K562 (cell line): ENCODE measurements at regions of chr1 and their contacts with region 1.

Region 1: DNA sequence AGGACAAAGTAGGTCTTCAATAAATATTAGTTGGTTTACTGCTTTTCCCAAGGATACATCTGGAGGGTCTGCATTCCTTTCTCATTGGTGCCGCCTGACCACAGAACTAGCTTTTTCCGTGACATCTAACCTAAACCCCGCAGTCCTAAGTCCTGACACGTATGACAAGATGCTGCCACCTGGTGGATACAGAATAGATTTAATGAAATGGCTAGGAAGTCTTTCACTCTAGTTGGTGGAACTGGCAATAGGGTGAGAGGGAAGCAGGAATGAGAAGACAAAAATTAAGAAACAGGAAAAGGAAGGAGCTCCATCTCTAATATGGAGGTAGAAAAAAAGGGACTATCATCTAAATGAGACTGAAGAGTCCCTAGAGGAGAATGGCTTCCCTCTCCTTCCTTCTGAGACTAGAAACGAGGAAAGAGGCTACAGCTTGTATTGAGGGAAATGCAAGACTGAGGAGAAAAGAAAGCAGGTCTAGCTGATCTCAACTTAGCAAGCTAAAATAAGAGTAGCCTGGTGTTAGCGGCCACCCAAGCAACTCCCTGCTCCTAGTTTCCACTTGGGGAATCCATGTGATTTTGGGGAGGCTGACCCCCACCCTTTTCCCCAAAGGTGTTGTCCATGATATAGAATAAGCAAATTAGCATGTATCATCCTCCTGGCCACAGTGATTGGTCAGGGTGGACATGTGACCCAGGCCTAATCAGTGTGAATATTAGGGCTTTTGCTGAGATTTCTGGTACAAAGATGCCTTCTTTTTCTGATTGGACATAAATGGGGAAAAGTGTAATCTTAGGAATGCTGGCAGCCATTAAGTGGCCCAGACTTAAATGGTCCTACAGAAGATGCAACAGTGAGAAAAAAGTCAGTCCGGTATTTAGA is 5.9 kb downstream of the RFX5 start:
- DNase-seq: peak; percentile 52 to 89 (median 62)
- ATAC-seq: peak; percentile 94
- H3K4me3 ChIP-seq: no peak overlapping the region
- H3K27ac ChIP-seq: peak overlapping the region; percentile 20; the same call in 1 of the 3 replicates
- H3K4me1 ChIP-seq: peaks cover 0 to 3% of the 10 kb centered on the region in 2 experiments; a peak in 3 of 5 replicates
- H3K27me3 ChIP-seq: no peaks in the 10 kb centered on the region
- CTCF ChIP-seq: peak; percentile 73 to 87 (median 75)
- EP300 ChIP-seq: no peak
- POLR2A ChIP-seq: no peak; the same call in 1 of the 2 replicates
- RAD21 ChIP-seq: peak; percentile 91 to 93

Region 2: GRCh38 chr1:151098126-151098525 is 243.0 kb before region 1 on chr1:
- CTCF ChIA-PET with region 1: interaction called, 6 read pairs
- POLR2A ChIA-PET with region 1: no interaction called
- in situ Hi-C with region 1: no loop called
- intact Hi-C with region 1: loop called (anchors 5 kb)
- DNase-seq: no peak
- ATAC-seq: no peak
- H3K4me3 ChIP-seq: no peak overlapping the region
- H3K27ac ChIP-seq: no peak overlapping the region
- H3K4me1 ChIP-seq: no peaks in the 10 kb centered on the region
- H3K27me3 ChIP-seq: no peaks in the 10 kb centered on the region
- CTCF ChIP-seq: no peak
- EP300 ChIP-seq: no peak
- POLR2A ChIP-seq: no peak
- RAD21 ChIP-seq: no peak

Region 3: GRCh38 chr1:151327223-151327902 is 13.7 kb before region 1 on chr1 and contains the start of gene PI4KB:
- CTCF ChIA-PET with region 1: no interaction called
- POLR2A ChIA-PET with region 1: interaction called, 39 read pairs
- in situ Hi-C with region 1: no loop called
- intact Hi-C with region 1: no loop called
- DNase-seq: peak; percentile 93 to 98 (median 96)
- ATAC-seq: peak; percentile 92
- H3K4me3 ChIP-seq: peak within 1 kb of the TSS; percentile 55
- H3K27ac ChIP-seq: peak within 1 kb of the TSS; percentile 86
- H3K4me1 ChIP-seq: peaks cover 3 to 29% of the 10 kb centered on the region in 2 experiments; a peak in 3 of 5 replicates
- H3K27me3 ChIP-seq: no peaks in the 10 kb centered on the region
- CTCF ChIP-seq: no peak
- EP300 ChIP-seq: no peak
- POLR2A ChIP-seq: peak; percentile 82
- RAD21 ChIP-seq: no peak
- polyA plus RNA-seq, gene PI4KB: 3.1 to 8.9 TPM